Left ventricle myocardium superior (tissue), 1 donor: ENCODE measurements at regions of chr20 and their contacts with region 1.

Region 1: GRCh38 chr20:57167971-57168706 is 98.3 kb downstream of the BMP7 start:
- DNase-seq: peak; percentile 73
- ATAC-seq: peak; percentile 91

Region 2: GRCh38 chr20:56722042-56722441 is 446.1 kb before region 1 on chr20:
- intact Hi-C with region 1: no loop called
- DNase-seq: no peak
- ATAC-seq: peak; percentile 41

Region 3: DNA sequence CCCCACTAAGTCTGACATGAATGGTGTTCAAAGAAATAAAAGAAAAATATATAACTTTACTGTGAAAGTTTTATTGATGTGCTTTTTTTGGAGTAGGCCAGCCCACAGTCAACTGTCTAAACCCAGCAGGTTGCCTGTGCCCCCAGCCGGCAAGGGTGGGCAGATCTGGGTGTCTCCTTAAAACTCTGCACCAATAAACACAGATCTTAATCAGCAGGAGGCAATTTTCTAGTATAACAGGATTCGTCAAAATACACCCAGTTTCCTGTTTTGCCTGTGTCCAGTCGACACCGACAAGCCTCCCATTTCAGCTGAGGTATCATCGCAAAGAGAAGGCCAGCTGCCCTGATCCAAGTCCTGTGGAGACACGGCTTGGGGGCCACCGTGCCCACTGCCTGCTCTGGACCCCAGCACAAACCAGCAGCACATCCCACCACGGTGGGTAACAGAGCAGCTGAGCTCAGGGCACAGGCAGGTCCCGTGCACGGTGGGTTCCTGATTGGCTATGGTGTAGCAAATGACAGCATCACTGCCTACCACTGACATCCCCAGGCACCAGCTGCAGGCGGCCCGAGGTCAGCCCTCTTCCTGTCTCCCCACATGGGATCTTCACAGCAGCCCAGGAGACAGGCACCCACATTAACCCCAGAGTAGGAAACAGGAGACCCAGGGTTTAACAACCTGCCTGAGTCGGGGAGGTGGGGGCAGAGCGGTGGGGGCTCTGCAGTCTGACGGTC is 82.6 kb after region 1 on chr20:
- intact Hi-C with region 1: loop called (anchors 10 kb)
- DNase-seq: no peak
- ATAC-seq: peak; percentile 35

Region 4: GRCh38 chr20:57351042-57351783 is 183.1 kb after region 1 on chr20 and contains the start of gene RAE1:
- intact Hi-C with region 1: loop called (anchors 5 kb)
- DNase-seq: peak; percentile 92
- ATAC-seq: peak; percentile 91
- total RNA-seq, gene RAE1: 15.1 TPM